ENCODE measurements at regions of chr9 and their contacts with region 1.

Region 1: GRCh38 chr9:128771745-128772519 is at the start of gene ZER1:
- DNase-seq: peak; percentile 24
- ATAC-seq: peak; percentile 96
- H3K4me3 ChIP-seq: peak within 1 kb of the TSS; percentile 81
- H3K27ac ChIP-seq: peak within 1 kb of the TSS; percentile 90
- H3K4me1 ChIP-seq: no peaks in the 10 kb centered on the region
- H3K27me3 ChIP-seq: no peaks in the 10 kb centered on the region
- CTCF ChIP-seq: peak in 1 of 3 experiments; percentile 9; a peak in 2 of 6 replicates
- EP300 ChIP-seq: no peak
- POLR2A ChIP-seq: peak; percentile 84
- RAD21 ChIP-seq: peak; percentile 10; the same call in 1 of the 2 replicates
- polyA plus RNA-seq, gene ZER1: 0.32 to 0.47 TPM

Region 2: GRCh38 chr9:128656416-128657343 is 115.3 kb before region 1 on chr9 and contains the start of gene DYNC2I2:
- CTCF ChIA-PET with region 1: no interaction called
- POLR2A ChIA-PET with region 1: no interaction called
- RAD21 ChIA-PET with region 1: no interaction called
- SMC1A ChIA-PET with region 1: no interaction called
- in situ Hi-C with region 1: no loop called
- intact Hi-C with region 1: loop called (anchors 10 kb)
- DNase-seq: peak; percentile 69
- ATAC-seq: peak; percentile 86
- H3K4me3 ChIP-seq: peak within 1 kb of the TSS; percentile 73
- H3K27ac ChIP-seq: peak within 1 kb of the TSS; percentile 99
- H3K4me1 ChIP-seq: peaks cover 3% of the 10 kb centered on the region; the same call in 1 of the 2 replicates
- H3K27me3 ChIP-seq: no peaks in the 10 kb centered on the region
- CTCF ChIP-seq: no peak
- EP300 ChIP-seq: 0 out of 4 replicates have a peak, but pooled peaks of 1 of the 2 experiments have one; percentile 26
- POLR2A ChIP-seq: peak; percentile 83
- RAD21 ChIP-seq: no peak
- polyA plus RNA-seq, gene DYNC2I2: 0.89 to 2.3 TPM

Region 3: DNA sequence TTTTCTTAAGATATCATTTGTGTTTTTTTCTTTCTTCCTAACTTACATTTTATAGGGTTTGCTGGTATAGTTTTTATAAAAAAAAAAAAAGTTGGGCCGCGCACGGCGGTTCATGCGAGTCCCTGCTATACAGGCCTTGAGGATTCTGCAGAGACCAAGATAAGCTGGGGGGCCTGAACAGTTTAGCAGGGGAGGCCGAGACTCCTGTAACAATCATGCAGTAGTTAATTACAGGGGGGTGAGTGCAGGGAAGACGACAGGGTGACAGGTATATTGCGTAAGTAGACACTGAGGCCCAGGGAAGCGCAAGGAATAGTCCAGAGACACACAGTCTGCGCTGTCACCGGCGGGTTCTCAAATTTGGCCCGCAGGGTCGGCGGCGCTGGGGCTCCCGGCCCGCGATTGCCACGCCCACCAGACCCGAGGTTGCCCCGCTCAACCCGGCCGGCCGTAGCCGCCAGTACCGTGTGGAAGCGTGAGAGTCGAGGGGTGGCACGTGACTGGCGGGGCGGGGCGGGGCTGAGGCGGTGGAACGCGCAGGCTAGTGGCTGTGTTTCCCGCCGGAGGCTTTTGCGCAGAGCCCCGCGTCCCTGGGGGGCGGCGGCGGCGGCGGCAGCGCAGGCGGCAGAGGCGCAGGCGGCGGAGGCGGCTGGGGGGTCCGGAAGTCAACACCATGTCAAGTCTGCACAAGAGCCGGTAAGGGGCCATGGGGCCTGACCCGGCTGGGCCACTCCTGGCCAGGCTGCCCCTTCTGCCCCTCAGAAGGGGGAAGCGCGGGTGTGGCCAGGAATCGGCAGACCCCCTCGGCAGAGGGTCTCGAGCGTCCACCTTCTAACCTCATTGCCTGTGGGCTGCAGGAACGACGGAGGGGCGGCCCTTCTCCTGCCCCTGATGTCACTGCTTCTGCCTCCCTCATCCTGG is 15.0 kb after region 1 on chr9 and contains the start of gene TBC1D13:
- CTCF ChIA-PET with region 1: interaction called, 14 read pairs
- POLR2A ChIA-PET with region 1: interaction called, 12 read pairs
- RAD21 ChIA-PET with region 1: interaction called, 4 read pairs
- SMC1A ChIA-PET with region 1: interaction called, 18 read pairs
- in situ Hi-C with region 1: no loop called
- intact Hi-C with region 1: loop called (anchors 2 kb)
- DNase-seq: peak; percentile 31
- ATAC-seq: peak; percentile 99
- H3K4me3 ChIP-seq: peak within 1 kb of the TSS; percentile 97
- H3K27ac ChIP-seq: peak within 1 kb of the TSS; percentile 58
- H3K4me1 ChIP-seq: peaks cover 10% of the 10 kb centered on the region
- H3K27me3 ChIP-seq: no peaks in the 10 kb centered on the region
- CTCF ChIP-seq: no peak
- EP300 ChIP-seq: peak in 1 of 2 experiments; percentile 31; a peak in 1 of 4 replicates
- POLR2A ChIP-seq: peak; percentile 83
- RAD21 ChIP-seq: no peak
- polyA plus RNA-seq, gene TBC1D13: 3.0 to 3.1 TPM